Calu3 (cell line): ENCODE measurements at regions of chr2 and their contacts with region 1.

Region 1: DNA sequence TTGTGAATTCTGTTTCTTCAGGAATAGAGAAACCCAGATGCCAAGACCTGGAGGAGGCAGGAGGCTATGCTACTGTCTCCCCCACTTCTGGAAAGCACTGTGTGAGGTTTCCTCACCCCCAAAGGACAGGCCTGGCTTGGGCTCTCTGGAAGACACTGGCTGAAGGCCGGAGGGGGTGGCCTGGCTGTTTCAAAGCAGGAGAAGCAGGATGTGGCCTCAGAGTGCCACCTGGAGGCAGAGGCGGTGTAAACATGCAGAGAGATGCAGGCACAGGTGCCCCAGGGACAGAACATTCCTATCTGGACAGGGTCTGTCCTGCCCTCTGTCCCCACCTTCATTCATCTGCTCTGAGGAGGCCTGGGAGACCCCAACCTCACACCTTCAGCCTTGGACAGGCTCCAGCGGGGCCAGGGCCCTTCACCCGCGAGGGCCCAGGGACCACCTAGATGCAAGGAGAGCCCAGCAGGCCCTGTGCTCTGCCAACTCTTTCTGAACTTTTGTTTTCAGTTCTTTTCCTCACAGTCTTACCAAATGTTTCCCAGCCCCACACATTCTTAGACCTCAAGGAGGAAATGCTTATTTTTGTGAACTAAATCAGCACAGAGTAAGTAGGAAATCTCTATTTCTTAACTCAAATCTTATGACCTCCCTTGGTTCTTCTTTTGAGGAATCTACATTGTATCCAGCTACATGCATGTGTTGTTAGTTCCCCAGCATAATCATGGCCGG is 79.2 kb downstream of the LONRF2 start:
- DNase-seq: peak; percentile 75
- H3K4me3 Mint-ChIP-seq: no peak overlapping the region
- H3K27ac Mint-ChIP-seq: no peak overlapping the region
- H3K4me1 Mint-ChIP-seq: no peaks in the 10 kb centered on the region
- H3K27me3 Mint-ChIP-seq: peaks cover 88% of the 10 kb centered on the region
- CTCF ChIP-seq: no peak

Region 2: DNA sequence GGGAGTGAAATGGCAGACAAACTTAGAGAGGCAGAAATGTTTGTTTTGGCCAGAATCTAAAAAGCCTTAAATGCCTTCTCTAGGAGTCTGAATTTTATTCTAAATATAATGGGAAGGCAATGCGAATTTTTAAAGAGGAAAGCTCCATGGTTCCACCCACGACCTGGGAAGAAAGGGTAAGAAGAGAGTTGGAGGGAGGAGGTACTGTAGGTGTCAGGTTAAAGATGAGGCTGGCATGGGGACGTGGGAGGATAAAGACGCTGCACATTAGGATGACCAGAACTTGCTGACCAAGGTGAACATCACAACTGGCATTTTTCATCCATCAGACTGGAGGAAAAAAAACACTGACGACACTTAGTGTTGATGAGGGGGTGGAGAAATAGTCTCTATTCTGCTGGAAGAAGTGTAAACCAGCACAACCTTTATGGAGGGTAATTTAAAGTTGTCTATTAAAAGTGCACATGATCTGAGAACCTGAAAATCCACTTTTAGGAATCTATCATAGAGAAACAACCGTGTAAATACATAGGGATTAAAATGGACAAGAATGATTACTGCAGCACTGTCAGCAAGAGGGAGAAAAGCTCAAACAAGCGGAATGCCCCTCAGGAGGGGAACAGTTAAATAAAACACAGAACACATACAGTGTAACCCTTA is 1432.6 kb before region 1 on chr2:
- CTCF ChIA-PET with region 1: no interaction called
- intact Hi-C with region 1: no loop called
- DNase-seq: no peak
- H3K4me3 Mint-ChIP-seq: no peak overlapping the region
- H3K27ac Mint-ChIP-seq: no peak overlapping the region
- H3K4me1 Mint-ChIP-seq: peaks cover 13% of the 10 kb centered on the region
- H3K27me3 Mint-ChIP-seq: no peaks in the 10 kb centered on the region
- CTCF ChIP-seq: no peak

Region 3: DNA sequence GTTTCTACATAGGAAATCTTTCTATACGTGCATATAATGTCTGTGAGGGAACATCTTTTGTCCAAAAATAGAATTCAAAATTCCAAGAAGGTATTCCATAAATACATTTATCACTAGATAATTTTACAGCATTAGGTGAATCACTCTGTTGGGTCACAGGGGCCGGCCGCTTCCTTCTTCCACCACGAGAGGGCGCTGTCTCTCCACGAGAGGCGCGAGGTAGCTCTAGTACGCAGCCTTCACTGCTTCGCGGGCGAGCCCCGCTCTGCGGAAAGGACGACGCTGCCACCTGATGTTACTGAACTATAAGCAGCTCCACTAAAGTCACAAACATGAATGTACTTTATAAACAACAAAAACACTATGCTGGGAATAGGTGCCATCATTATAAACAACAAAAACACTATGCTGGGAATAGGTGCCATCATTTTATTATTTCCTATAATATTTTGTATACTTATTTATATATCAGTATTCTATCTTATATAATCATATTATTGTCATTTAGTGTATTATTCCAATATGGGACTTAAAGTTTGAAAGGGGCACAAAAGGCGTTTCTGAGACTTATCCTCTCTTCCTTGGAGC is 683.9 kb before region 1 on chr2:
- CTCF ChIA-PET with region 1: interaction called, 8 read pairs
- intact Hi-C with region 1: loop called (anchors 1 kb)
- DNase-seq: peak; percentile 85
- H3K4me3 Mint-ChIP-seq: no peak overlapping the region
- H3K27ac Mint-ChIP-seq: no peak overlapping the region
- H3K4me1 Mint-ChIP-seq: no peaks in the 10 kb centered on the region
- H3K27me3 Mint-ChIP-seq: peaks cover 90% of the 10 kb centered on the region
- CTCF ChIP-seq: peak; percentile 98

Region 4: DNA sequence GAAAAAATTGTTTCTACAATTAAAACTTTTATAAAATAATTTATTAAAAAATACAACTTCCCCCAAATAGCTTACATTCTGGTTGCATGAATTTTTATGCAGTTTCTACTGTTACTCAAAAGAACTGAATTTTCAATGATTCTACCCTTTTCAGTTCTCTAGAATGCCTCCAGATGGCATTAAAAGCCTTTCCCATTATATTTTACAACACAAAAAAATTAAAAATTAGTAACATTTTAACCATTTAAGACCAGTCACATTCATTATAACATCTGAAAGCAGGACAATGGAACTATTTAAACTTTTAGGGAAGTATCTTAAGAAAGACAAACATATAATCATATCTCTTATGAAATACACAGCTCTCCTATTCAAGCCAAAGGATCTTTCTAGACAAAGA is 517.2 kb before region 1 on chr2:
- CTCF ChIA-PET with region 1: no interaction called
- intact Hi-C with region 1: loop called (anchors 1 kb)
- DNase-seq: no peak
- H3K4me3 Mint-ChIP-seq: no peak overlapping the region
- H3K27ac Mint-ChIP-seq: no peak overlapping the region
- H3K4me1 Mint-ChIP-seq: no peaks in the 10 kb centered on the region
- H3K27me3 Mint-ChIP-seq: peaks cover 14% of the 10 kb centered on the region
- CTCF ChIP-seq: no peak

Region 5: DNA sequence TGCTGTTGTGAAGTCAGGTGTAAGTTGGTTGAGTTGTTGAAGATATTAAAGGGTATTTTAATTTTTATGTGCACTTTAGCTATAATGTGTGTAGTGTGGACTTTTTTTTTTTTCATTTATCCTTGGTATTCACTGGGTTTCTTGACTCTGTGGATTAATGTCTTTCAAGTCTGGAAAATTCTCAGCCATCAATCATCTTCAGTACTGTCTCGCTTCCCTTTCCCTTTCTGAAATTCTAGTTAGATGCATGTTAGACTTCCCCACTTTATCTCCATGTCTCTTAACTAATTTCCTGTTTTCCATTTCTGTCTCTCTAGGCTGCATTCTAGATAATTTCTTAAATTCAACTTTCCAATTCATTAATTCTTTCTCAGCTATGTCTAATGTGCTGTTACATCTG is 505.5 kb before region 1 on chr2:
- CTCF ChIA-PET with region 1: no interaction called
- intact Hi-C with region 1: no loop called
- DNase-seq: no peak
- H3K4me3 Mint-ChIP-seq: no peak overlapping the region
- H3K27ac Mint-ChIP-seq: no peak overlapping the region
- H3K4me1 Mint-ChIP-seq: peaks cover 10% of the 10 kb centered on the region
- H3K27me3 Mint-ChIP-seq: peaks cover 19% of the 10 kb centered on the region
- CTCF ChIP-seq: no peak

Region 6: GRCh38 chr2:99818842-99819241 is 424.2 kb before region 1 on chr2:
- CTCF ChIA-PET with region 1: interaction called, 3 read pairs
- intact Hi-C with region 1: loop called (anchors 1 kb)
- DNase-seq: no peak
- H3K4me3 Mint-ChIP-seq: no peak overlapping the region
- H3K27ac Mint-ChIP-seq: no peak overlapping the region
- H3K4me1 Mint-ChIP-seq: no peaks in the 10 kb centered on the region
- H3K27me3 Mint-ChIP-seq: peaks cover 57% of the 10 kb centered on the region
- CTCF ChIP-seq: no peak